HEK293 (cell line): ENCODE measurements at regions of chr19 and their contacts with region 1.

Region 1: DNA sequence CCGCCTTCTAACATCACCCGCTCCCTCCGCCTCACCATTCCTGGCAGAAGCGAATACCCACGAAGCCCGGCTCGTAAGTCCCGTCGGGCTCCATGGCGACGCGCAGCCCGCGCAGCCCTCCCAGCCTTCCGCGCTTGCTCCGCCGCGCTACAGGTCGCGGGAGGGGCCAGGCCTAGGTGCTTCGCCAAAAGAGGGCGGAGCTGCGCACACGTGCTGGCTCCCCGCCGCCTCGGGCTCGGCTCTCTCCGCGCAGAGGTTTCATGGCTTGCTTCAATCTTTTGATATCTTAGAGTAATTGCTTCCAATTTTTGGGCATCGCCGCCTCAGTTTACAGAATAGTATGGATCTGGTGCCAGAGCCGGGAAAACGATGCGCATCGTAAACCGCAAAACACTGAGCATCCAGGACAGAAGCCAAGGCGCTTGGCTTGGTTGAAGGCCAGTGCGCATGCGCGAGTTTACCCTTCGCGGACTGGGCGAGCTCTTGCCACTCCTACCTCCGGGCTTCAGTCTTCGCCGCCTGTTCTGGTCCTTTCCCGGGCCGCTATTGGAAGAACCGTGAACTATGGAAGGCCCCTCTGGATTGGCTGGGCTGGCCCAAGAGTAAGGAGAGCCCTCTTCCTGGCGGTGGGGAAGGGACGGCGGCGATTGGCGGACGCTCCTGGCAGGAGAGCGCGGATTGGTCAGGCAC is at the start of gene POLR2I:
- H3K4me3 ChIP-seq: peak within 1 kb of the TSS; percentile 58
- H3K27ac ChIP-seq: peak within 1 kb of the TSS; percentile 92
- H3K4me1 ChIP-seq: peaks cover 27% of the 10 kb centered on the region
- CTCF ChIP-seq: 0 out of 2 replicates have a peak, but pooled peaks have one; percentile 11

Region 2: DNA sequence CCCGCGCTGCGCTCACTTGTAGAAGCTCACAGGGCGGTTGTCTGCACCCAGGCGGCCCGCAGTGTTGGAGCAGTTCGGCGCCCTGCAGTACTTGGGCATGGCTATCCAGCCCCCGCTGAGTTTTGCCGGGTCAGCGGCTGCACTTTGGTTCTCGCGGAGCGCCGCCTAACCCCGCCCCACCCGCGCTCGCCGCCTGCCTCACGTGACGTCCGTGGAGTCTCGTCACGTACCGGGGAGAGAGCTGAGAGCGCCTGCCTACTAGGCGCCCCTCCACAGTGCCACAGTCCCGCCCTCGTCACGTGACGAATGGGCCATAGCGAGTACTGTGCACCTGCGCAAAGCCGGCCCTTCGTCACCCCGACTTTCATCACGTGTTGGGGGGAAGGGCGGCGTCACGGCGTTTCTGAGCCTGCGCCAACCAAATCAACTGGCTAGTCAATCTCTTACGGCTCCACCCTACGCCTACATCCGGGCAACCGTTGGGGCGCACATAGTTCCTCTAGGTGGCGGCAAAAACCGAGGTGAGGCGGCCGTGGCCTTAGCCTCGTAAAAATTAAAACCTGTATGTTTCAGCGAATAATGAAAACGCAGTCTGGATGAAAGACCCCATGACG is 60.7 kb before region 1 on chr19 and contains the start of gene THAP8:
- CTCF ChIA-PET with region 1: interaction called, 23 read pairs
- POLR2A ChIA-PET with region 1: interaction called, 46 read pairs
- H3K4me3 ChIP-seq: peak within 1 kb of the TSS; percentile 58
- H3K27ac ChIP-seq: peak within 1 kb of the TSS; percentile 93
- H3K4me1 ChIP-seq: peaks cover 38% of the 10 kb centered on the region
- CTCF ChIP-seq: peak; percentile 92

Region 3: GRCh38 chr19:36073121-36073872 is 41.6 kb before region 1 on chr19:
- CTCF ChIA-PET with region 1: interaction called, 3 read pairs
- POLR2A ChIA-PET with region 1: interaction called, 18 read pairs
- H3K4me3 ChIP-seq: no peak overlapping the region
- H3K27ac ChIP-seq: peak overlapping the region; percentile 31; the same call in 1 of the 2 replicates
- H3K4me1 ChIP-seq: peaks cover 21% of the 10 kb centered on the region
- CTCF ChIP-seq: no peak

Region 4: DNA sequence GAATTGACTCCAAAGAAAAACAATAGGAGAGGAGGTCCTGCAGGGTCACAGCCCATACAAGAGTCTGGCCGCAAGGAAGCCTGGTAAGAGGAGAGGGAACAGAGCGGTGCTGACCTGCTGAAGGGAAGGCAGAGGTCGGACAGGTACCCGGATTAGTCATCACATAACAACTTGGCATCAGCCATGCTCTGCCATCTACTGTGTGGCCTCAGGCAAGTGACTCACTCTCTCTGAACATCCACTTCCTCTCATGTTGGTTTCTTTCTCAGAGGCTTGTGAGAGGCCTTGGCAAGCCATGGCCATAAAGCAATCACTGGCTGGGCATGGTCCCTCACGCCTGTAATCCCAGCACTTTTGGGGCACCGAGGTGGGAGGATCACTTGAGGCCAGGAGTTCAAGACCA is 17.6 kb after region 1 on chr19:
- CTCF ChIA-PET with region 1: interaction called, 49 read pairs
- POLR2A ChIA-PET with region 1: interaction called, 96 read pairs
- H3K4me3 ChIP-seq: no peak overlapping the region
- H3K27ac ChIP-seq: no peak overlapping the region
- H3K4me1 ChIP-seq: peaks cover 12% of the 10 kb centered on the region
- CTCF ChIP-seq: no peak

Region 5: GRCh38 chr19:36169084-36169760 is 54.3 kb after region 1 on chr19:
- CTCF ChIA-PET with region 1: interaction called, 4 read pairs
- POLR2A ChIA-PET with region 1: interaction called, 16 read pairs
- H3K4me3 ChIP-seq: no peak overlapping the region
- H3K27ac ChIP-seq: peak overlapping the region; percentile 92
- H3K4me1 ChIP-seq: peaks cover 28% of the 10 kb centered on the region
- CTCF ChIP-seq: no peak